CD4-positive, alpha-beta T cell (primary cell): ENCODE measurements at regions of chr1 and their contacts with region 1.

Region 1: DNA sequence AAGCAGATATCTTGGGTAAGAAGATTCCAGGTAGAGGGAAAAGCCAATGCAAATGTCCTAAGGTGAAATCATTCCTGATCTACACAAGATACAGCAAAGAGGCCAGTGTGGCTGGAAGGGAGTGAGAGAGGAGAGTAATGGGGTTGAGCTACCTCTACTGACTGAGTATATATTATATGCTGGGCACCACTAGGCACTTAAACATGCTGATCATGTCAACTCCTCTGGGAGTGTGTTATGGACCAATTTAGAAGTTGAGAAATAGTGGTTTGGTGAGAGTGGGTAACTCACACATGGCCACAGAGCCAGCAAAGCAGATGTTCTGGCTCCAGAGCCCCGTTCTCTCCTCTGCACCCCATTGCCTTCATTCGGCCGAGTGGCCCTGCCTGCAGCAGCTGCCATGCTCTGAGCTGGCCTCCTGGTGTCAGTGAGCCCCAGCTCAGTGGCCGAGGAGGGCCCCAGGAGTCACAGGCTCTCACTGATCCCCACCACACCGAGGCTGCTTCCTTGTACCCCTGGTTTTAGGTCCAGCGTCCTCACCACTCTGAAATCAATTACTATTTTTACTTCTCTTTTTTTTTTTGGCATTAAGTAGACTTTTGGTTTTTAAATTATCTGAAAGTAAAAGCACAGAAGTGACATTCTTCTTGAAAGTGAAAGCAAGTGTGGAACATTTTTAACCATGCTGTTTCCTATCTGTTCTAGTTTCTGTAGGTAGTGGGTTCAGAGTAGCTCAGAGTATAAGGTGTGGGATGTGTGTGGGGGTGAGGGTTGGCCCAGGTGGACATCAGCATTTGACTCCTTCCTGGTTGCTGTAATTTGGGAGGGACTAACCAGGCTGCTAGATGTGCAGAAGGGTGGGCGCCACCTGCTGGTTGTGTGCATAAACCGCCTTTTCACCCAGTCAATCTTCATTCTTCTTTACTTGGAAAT is 45.8 kb upstream of the CRNN start:
- DNase-seq: peak; percentile 57 to 89 (median 67)
- ATAC-seq: peak; percentile 59
- H3K4me3 ChIP-seq: peak overlapping the region; percentile 31
- H3K4me3 Mint-ChIP-seq: peak overlapping the region; percentile 80
- H3K27ac ChIP-seq: peak overlapping the region in 1 of 2 donors; percentile 5
- H3K27ac Mint-ChIP-seq: peak overlapping the region; percentile 75
- H3K4me1 ChIP-seq: peaks cover 14% of the 10 kb centered on the region
- H3K4me1 Mint-ChIP-seq: peaks cover 29% of the 10 kb centered on the region
- H3K27me3 ChIP-seq: no peaks in the 10 kb centered on the region
- H3K27me3 Mint-ChIP-seq: no peaks in the 10 kb centered on the region
- CTCF ChIP-seq: peak; percentile 76

Region 2: DNA sequence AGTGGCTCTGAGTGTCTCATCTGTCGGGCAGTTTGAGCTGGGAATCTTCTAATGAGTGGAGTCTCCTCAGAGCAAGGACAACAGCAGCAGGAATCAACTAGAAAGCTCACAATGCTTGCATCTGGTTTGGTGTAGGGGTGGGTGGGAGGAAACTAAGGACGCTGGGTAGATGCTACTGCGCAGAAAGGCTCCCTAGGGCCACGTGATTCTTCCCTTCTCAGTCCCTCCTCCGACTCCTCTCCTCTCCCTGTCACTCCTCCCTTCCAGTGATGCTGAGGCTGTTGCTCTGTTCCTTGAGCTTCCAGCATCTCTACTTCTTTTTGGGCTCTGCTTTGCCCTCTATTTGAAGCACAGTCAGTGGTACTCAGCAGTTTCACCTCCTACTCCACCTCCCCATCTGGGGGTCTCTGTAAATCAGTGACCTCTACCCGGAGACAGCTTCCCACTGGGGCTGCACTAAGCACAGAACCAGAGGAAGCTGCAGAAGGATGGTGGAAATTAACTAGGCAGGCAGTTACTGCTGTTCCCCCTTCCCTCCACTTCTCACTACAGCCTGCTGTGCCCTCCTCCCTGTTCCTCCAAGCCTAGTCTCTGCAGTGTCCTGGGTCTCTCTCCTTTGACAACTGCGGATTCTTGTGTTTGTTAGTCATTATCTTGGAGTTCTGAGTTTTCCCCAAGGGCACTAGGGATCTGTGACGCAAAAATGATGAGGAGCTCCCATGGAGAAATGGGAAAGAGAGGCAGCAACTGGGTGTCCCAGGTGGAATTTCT is 660.5 kb before region 1 on chr1:
- CTCF ChIA-PET with region 1: no interaction called
- POLR2A ChIA-PET with region 1: no interaction called
- intact Hi-C with region 1: no loop called
- DNase-seq: no peak
- ATAC-seq: no peak
- H3K4me3 ChIP-seq: no peak overlapping the region
- H3K4me3 Mint-ChIP-seq: no peak overlapping the region
- H3K27ac ChIP-seq: no peak overlapping the region
- H3K27ac Mint-ChIP-seq: no peak overlapping the region
- H3K4me1 ChIP-seq: peaks cover 26% of the 10 kb centered on the region
- H3K4me1 Mint-ChIP-seq: peaks cover 10% of the 10 kb centered on the region
- H3K27me3 ChIP-seq: no peaks in the 10 kb centered on the region
- H3K27me3 Mint-ChIP-seq: no peaks in the 10 kb centered on the region
- CTCF ChIP-seq: no peak

Region 3: DNA sequence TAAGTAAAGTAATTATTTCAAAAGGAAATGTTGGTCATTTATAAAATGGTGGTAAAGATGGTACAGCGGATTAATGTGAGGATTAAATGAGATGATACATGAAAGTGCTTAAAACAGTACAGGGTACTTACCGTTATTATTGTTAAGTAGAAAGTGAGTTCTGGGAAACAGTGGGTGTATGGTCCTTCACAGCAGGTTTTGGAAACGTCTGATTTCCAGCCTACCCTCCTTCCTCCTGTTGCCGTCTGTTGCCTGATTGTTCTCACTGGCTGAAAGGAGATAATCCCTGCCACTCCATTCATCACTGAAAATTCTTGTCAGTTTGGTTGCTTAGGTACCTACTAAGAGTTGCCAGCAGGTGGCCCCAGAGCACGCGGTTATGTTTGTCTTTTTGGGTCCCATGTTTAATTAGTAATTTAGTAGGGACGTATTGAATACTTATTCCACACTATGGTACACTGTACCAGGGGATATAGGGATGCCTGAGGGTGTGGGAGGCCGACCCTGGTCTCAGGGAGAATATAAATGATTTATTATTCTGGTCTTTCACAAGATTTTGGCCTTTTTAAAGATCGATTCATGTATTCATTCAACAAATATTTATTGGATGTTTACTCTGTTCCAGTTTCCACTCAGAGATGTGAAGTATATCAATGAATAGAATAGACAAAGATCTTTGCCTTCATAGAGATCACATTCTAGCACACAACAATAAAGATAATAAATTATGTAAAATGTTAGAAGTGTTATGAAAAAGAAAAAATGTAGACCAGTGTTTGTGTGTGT is 270.0 kb before region 1 on chr1:
- CTCF ChIA-PET with region 1: interaction called, 47 read pairs
- POLR2A ChIA-PET with region 1: interaction called, 24 read pairs
- intact Hi-C with region 1: loop called (anchors 1 kb)
- DNase-seq: peak; percentile 37 to 84 (median 58)
- ATAC-seq: peak; percentile 71
- H3K4me3 ChIP-seq: peak overlapping the region; percentile 68
- H3K4me3 Mint-ChIP-seq: peak overlapping the region; percentile 72
- H3K27ac ChIP-seq: no peak overlapping the region
- H3K27ac Mint-ChIP-seq: no peak overlapping the region
- H3K4me1 ChIP-seq: peaks cover 14% of the 10 kb centered on the region
- H3K4me1 Mint-ChIP-seq: peaks cover 10% of the 10 kb centered on the region
- H3K27me3 ChIP-seq: peaks cover 3 to 8% of the 10 kb centered on the region in 2 experiments
- H3K27me3 Mint-ChIP-seq: peaks cover 9% of the 10 kb centered on the region
- CTCF ChIP-seq: peak; percentile 83

Region 4: DNA sequence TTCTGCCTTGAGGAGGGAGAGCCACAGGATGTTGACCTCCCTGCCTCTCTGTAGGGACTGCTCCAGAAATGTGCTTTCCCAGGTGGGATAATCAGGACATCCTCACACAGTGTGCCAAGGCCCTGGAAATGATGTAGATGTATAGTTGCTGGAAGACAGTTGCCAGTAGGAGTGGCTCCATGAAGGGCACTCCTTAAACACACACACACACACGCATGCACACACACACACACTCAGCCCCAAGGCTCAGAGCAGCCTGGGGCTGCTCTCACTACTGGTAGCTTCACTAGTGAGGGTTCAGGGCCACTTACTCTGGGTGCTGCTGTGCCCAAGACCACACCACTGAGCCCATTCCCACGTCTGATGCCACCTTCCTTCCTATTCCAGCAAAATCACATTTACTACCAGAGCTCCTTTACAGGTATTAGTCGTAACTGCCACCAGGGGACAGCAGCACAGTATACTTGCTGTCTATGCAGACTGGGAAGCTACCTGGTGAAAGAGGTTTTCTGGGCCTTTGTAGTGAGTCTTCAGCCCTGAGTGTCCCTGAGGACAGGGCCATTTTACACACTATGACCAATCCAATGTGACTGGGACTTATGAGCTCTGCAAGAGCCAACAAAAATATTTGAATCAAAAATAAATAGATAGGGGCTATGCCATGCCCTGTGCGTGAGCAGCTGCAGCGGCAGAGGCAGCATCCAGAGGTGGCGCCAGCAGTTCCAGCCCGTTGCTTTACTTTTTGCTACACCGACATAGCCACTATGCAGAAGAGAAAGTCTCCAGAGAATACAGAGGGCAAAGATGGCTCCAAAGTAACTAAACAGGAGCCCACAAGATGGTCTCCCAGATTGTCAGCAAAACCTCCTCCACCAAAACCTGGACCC is 60.8 kb before region 1 on chr1:
- CTCF ChIA-PET with region 1: interaction called, 16 read pairs
- POLR2A ChIA-PET with region 1: interaction called, 5 read pairs
- intact Hi-C with region 1: loop called in 1 of 2 experiments (anchors 5 kb)
- DNase-seq: peak in 5 of 14 experiments; percentile 3 to 48 (median 32)
- ATAC-seq: no peak
- H3K4me3 ChIP-seq: no peak overlapping the region
- H3K4me3 Mint-ChIP-seq: no peak overlapping the region
- H3K27ac ChIP-seq: no peak overlapping the region
- H3K27ac Mint-ChIP-seq: no peak overlapping the region
- H3K4me1 ChIP-seq: peaks cover 2% of the 10 kb centered on the region
- H3K4me1 Mint-ChIP-seq: peaks cover 13% of the 10 kb centered on the region
- H3K27me3 ChIP-seq: peaks cover 0 to 8% of the 10 kb centered on the region in 2 experiments
- H3K27me3 Mint-ChIP-seq: peaks cover 22% of the 10 kb centered on the region
- CTCF ChIP-seq: no peak

Region 5: GRCh38 chr1:152448095-152448494 is 11.8 kb before region 1 on chr1:
- CTCF ChIA-PET with region 1: interaction called, 20 read pairs
- POLR2A ChIA-PET with region 1: interaction called, 4 read pairs
- intact Hi-C with region 1: no loop called
- DNase-seq: no peak
- ATAC-seq: no peak
- H3K4me3 ChIP-seq: no peak overlapping the region
- H3K4me3 Mint-ChIP-seq: no peak overlapping the region
- H3K27ac ChIP-seq: no peak overlapping the region
- H3K27ac Mint-ChIP-seq: no peak overlapping the region
- H3K4me1 ChIP-seq: no peaks in the 10 kb centered on the region
- H3K4me1 Mint-ChIP-seq: no peaks in the 10 kb centered on the region
- H3K27me3 ChIP-seq: no peaks in the 10 kb centered on the region
- H3K27me3 Mint-ChIP-seq: no peaks in the 10 kb centered on the region
- CTCF ChIP-seq: no peak